Activated CD4-positive, alpha-beta T cell treated with anti-CD3 and anti-CD28 coated beads, Interleukin-2, amount 10 ng/mL, durations not matched to agents 7 days and 5 days (primary cell): ENCODE measurements at regions of chr12 and their contacts with region 1.

Region 1: GRCh38 chr12:6890789-6891645 is 13.6 kb upstream of the LRRC23 start:
- DNase-seq: peak; percentile 98
- H3K4me3 Mint-ChIP-seq: peak overlapping the region; percentile 82
- H3K27ac Mint-ChIP-seq: peak overlapping the region; percentile 96
- H3K4me1 Mint-ChIP-seq: peaks cover 29% of the 10 kb centered on the region
- H3K27me3 Mint-ChIP-seq: no peaks in the 10 kb centered on the region

Region 2: DNA sequence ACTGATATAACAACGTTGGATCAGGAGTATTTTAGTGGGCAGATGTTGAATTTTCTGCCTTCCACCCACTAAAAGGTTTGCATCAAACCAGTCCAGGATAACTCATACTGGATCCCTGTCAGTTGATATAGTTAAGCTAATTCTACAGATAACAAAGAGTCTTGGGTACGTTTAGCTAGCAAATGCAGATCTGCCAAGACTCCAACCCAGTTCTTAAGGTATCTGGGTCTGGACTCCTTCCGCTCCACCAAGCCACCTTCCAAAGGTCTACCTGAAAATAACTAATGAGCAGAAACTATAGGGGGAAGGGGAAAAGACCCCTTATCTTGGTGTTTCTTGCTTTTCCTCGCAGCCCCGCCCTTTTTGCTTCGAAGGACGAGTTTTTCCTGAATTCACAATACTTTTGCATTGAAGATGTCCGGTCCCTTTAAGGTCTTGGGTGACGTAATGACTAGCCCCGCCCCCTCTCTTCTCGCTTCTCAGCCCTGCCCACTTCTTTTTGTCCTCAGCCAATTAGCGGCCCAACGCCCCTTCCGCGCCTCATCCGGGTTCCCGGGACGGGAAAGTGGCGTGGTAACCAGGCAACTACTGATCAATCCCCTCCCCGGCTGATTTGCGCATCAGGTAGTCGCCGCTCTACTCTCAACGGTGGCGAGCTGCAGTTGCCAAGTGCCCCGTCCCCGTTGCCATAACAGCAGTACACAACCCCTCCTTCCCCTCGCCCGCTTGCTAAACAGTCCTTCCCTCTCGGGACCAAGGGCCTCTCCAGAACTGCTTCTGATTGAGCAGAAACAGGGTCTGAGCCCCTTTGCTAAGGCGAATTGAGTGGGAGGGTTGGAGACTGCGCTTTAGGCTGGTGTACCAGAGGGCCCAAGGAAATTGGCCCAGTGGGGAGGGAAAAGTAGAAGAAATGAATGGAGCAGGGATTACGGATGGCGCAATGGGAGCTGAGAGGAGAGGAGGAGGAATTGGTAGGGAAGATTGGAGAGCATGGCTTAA is 13.6 kb after region 1 on chr12 and contains the start of gene LRRC23:
- CTCF ChIA-PET with region 1: interaction called, 25 read pairs
- POLR2A ChIA-PET with region 1: interaction called, 3 read pairs
- DNase-seq: peak; percentile 99
- H3K4me3 Mint-ChIP-seq: no peak within 1 kb of the TSS
- H3K27ac Mint-ChIP-seq: no peak within 1 kb of the TSS
- H3K4me1 Mint-ChIP-seq: peaks cover 11% of the 10 kb centered on the region
- H3K27me3 Mint-ChIP-seq: no peaks in the 10 kb centered on the region
- total RNA-seq, gene LRRC23: 4.4 to 5.2 TPM

Region 3: DNA sequence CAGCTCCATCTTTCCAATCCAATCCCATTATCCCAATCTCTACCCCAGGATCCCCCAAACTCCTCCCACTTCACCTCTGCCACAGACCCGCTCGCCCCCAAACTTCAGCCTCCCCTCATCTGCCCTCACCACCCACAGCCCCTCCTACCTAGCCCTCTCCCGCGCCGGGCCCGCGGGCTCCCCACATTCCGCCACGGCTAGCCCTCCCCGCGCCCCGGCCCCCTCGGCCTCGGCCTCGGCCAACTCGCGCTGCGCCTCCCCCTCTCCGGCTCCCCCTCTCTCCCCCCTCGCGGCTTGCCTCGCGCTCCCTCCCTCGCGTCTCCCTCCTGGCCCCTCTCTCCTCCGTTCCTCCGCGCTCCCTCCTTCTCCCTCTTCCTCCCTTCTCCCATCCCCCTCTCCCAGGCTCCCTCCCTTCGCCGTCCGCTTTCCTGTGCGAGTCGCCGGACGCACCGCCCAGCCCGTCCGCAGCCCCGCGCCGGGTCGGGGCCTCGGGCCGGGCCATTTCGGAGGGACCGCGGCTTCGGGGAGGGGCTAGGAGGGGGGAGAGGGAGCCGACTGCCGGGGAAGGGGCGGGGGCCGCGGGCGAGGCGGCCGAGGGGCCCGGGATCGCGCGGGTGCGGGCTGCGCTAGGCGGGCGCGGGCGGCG is 36.5 kb after region 1 on chr12 and contains the start of gene ATN1:
- CTCF ChIA-PET with region 1: interaction called, 24 read pairs
- POLR2A ChIA-PET with region 1: no interaction called
- DNase-seq: peak; percentile 48
- H3K4me3 Mint-ChIP-seq: peak within 1 kb of the TSS; percentile 84
- H3K27ac Mint-ChIP-seq: peak within 1 kb of the TSS; percentile 91
- H3K4me1 Mint-ChIP-seq: peaks cover 73% of the 10 kb centered on the region
- H3K27me3 Mint-ChIP-seq: no peaks in the 10 kb centered on the region
- total RNA-seq, gene ATN1: 27.3 to 27.6 TPM

Region 4: GRCh38 chr12:6944381-6945186 is 53.6 kb after region 1 on chr12:
- CTCF ChIA-PET with region 1: interaction called, 16 read pairs
- POLR2A ChIA-PET with region 1: interaction called, 6 read pairs
- DNase-seq: peak; percentile 92
- H3K4me3 Mint-ChIP-seq: peak overlapping the region; percentile 97
- H3K27ac Mint-ChIP-seq: peak overlapping the region; percentile 96
- H3K4me1 Mint-ChIP-seq: peaks cover 68% of the 10 kb centered on the region
- H3K27me3 Mint-ChIP-seq: no peaks in the 10 kb centered on the region